ENCODE measurements at regions of chr20 and their contacts with region 1.

Region 1: DNA sequence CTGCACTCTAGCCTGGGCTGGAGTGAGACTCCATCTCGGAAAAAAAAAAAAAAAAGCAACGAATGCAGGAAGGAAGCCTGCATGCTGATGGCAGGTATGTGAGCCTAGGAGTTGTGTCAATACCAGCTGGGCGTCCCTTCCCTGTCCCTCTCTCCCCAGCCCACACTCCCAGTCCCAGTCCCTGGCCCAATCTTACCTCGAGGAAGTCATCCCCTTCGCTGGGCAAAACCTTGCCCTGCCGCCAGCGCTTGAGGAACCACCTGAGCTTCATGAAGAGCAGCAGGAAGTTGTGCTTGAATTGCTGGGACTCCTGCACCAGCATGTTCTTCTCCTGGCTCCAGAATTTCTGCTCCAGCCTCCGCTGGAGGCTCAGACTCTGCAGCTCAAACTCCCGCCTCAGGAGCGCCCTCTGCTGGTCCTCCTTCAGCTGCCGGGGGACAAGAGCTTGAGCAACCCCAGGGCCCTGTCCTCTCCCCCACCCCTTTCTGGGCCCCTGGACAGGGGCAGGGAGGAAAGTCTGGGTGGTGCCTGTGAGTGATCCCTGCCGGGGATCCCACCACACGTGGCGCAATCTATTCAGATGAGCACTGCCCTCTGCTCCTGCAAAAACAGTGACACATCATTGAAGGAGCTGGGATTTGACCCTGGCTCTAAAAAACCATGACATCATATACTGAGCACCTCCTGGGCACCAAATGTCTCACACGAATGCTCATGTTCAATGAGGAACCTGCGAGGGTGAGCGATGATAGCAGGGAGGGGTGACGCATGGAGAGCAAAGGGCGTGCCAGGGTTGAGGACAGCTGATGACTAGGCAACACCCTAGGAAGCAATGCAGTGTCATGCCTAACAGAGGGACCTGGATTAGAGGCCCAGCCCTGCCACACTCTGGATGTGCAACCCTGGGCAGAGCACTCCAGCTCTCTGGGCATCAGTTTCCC is 35.0 kb upstream of the DSN1 start:
- DNase-seq: peak; percentile 80
- H3K4me3 Mint-ChIP-seq: no peak overlapping the region
- H3K27ac Mint-ChIP-seq: no peak overlapping the region
- H3K4me1 Mint-ChIP-seq: peaks cover 4% of the 10 kb centered on the region
- H3K27me3 Mint-ChIP-seq: no peaks in the 10 kb centered on the region

Region 2: GRCh38 chr20:36717657-36718056 is 90.9 kb before region 1 on chr20:
- CTCF ChIA-PET with region 1: no interaction called
- POLR2A ChIA-PET with region 1: interaction called, 11 read pairs
- DNase-seq: peak; percentile 21
- H3K4me3 Mint-ChIP-seq: no peak overlapping the region
- H3K27ac Mint-ChIP-seq: no peak overlapping the region
- H3K4me1 Mint-ChIP-seq: peaks cover 12% of the 10 kb centered on the region
- H3K27me3 Mint-ChIP-seq: no peaks in the 10 kb centered on the region

Region 3: GRCh38 chr20:36773597-36774390 is 34.8 kb before region 1 on chr20 and contains the start of gene DSN1:
- CTCF ChIA-PET with region 1: interaction called, 10 read pairs
- POLR2A ChIA-PET with region 1: no interaction called
- DNase-seq: peak; percentile 98
- H3K4me3 Mint-ChIP-seq: peak within 1 kb of the TSS; percentile 88
- H3K27ac Mint-ChIP-seq: peak within 1 kb of the TSS; percentile 95
- H3K4me1 Mint-ChIP-seq: peaks cover 44% of the 10 kb centered on the region
- H3K27me3 Mint-ChIP-seq: no peaks in the 10 kb centered on the region
- total RNA-seq, gene DSN1: 33.5 to 35.3 TPM

Region 4: DNA sequence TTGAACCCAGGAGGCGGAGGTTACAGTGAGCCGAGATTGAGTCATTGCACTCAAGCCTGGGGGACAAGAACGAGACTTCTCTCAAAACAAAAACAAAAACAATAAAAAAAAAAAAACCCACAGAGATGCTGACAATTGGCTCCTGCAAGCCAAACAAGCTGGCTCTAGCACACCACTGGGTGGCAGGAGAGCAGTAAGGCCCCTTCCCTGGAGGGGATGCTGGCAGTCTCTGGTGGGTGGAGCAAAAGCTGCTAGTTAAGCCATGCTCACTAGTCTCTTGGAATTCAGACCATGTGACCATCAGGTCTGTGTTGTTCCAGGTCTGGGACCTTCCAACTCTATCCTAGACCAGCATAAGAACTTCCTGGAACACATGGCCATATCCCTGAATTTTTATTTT is 16.2 kb before region 1 on chr20:
- CTCF ChIA-PET with region 1: interaction called, 14 read pairs
- POLR2A ChIA-PET with region 1: no interaction called
- DNase-seq: peak; percentile 23
- H3K4me3 Mint-ChIP-seq: no peak overlapping the region
- H3K27ac Mint-ChIP-seq: no peak overlapping the region
- H3K4me1 Mint-ChIP-seq: no peaks in the 10 kb centered on the region
- H3K27me3 Mint-ChIP-seq: no peaks in the 10 kb centered on the region

Region 5: DNA sequence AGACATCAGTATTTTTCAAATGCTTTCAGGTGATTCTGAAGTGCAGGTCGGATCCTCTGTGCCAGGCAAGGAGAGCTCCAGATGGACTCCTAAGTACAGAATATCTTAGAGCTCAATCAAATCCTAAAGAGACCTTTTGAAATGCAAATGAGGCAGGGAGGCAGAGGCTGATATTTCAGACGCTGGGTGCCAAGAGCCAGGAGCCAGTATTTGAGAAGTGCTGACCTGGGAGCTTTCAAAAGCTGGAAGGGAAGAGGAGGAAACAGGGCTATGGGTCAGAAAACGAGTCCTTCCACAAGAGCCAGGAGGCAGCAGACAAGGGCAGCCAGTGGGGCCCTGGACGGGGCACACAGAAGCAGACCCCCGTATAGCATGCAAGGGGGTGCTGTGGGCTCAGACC is 11.1 kb after region 1 on chr20:
- CTCF ChIA-PET with region 1: interaction called, 17 read pairs
- POLR2A ChIA-PET with region 1: no interaction called
- DNase-seq: no peak
- H3K4me3 Mint-ChIP-seq: no peak overlapping the region
- H3K27ac Mint-ChIP-seq: no peak overlapping the region
- H3K4me1 Mint-ChIP-seq: no peaks in the 10 kb centered on the region
- H3K27me3 Mint-ChIP-seq: peaks cover 3% of the 10 kb centered on the region

Region 6: GRCh38 chr20:36825385-36826104 is 17.0 kb after region 1 on chr20:
- CTCF ChIA-PET with region 1: interaction called, 17 read pairs
- POLR2A ChIA-PET with region 1: no interaction called
- DNase-seq: no peak
- H3K4me3 Mint-ChIP-seq: no peak overlapping the region
- H3K27ac Mint-ChIP-seq: no peak overlapping the region
- H3K4me1 Mint-ChIP-seq: peaks cover 25% of the 10 kb centered on the region
- H3K27me3 Mint-ChIP-seq: no peaks in the 10 kb centered on the region

Region 7: DNA sequence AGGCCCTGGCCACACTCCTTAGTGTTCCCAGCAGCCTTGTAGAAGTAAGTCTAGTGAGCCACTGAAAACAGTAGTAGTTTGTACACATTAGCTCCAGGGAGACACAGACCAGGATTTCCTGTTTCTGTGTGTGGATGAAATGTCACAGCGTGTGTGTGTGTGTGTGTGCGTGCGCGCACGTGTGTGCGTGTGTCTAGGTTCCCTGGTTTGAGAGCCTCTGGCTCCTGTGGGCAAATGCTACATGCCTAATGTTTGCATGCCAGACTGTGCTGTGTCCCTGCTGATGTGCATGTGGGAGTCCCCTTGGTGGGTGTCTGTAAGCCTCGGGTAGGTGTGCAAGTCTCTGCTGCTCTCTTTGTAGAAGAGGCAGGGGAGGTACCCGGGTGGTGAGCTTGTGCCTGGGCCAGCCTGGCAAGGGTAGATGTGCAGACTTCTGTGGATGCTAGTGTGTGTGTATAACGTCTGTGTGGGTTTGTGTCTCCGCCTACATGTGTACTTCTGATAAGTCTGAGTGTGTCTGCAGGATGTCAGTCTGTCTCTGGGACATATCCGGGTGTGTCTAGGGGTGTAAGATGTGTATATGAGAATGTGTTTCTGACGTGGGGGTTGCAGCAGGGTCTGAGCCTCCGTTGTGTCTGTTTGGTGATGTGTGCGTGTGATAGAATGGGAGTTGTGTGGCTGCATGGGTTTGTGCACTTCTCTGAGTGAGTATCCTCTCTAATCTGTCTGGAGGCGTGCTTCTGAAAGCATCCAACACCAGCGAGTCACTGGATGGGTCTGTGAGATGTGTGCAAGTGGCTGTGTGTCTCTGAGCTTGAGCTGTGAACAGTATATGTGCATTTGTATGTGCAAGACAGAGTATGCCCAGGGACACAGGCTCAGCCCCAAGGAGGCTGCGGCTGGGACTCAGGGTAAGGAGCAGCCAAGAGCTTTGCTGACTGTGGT is 48.4 kb after region 1 on chr20:
- CTCF ChIA-PET with region 1: interaction called, 11 read pairs
- POLR2A ChIA-PET with region 1: interaction called, 3 read pairs
- DNase-seq: peak; percentile 71
- H3K4me3 Mint-ChIP-seq: no peak overlapping the region
- H3K27ac Mint-ChIP-seq: peak overlapping the region; percentile 54
- H3K4me1 Mint-ChIP-seq: peaks cover 27% of the 10 kb centered on the region
- H3K27me3 Mint-ChIP-seq: peaks cover 17% of the 10 kb centered on the region

Measured in activated CD4-positive, alpha-beta T cell treated with anti-CD3 and anti-CD28 coated beads, Interleukin-2, amount 10 ng/mL, durations not matched to agents 7 days and 5 days (primary cell).